ENCODE measurements at regions of chr6 and their contacts with region 1.

Region 1: GRCh38 chr6:113690281-113691259 is 166.6 kb upstream of the MARCKS start:
- DNase-seq: no peak
- H3K4me3 ChIP-seq: no peak overlapping the region
- H3K4me3 Mint-ChIP-seq: no peak overlapping the region
- H3K27ac Mint-ChIP-seq: no peak overlapping the region
- H3K4me1 ChIP-seq: peaks cover 50% of the 10 kb centered on the region
- H3K4me1 Mint-ChIP-seq: peaks cover 44% of the 10 kb centered on the region
- H3K27me3 ChIP-seq: no peaks in the 10 kb centered on the region
- H3K27me3 Mint-ChIP-seq: no peaks in the 10 kb centered on the region
- CTCF ChIP-seq: no peak

Region 2: DNA sequence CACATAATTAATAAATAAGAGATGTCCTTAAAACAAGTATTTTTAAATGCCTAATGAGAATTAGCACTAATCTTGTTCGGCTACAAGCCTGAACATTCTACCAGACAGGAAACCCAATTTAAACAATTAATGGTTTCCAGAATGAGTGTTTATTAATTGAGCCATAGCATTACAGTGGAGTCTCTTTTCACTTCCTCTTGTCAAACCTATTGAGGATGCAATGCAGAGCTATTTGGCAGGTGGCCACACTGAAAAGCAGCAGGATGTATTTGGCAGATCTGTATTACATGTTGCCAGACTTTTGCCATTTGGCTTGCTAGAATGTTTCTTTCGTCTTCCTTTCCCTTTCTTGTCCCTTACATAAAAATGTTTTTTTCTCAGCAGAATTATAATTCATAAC is 308.6 kb before region 1 on chr6:
- CTCF ChIA-PET with region 1: no interaction called
- POLR2A ChIA-PET with region 1: no interaction called
- intact Hi-C with region 1: no loop called
- DNase-seq: no peak
- H3K4me3 ChIP-seq: no peak overlapping the region
- H3K4me3 Mint-ChIP-seq: no peak overlapping the region
- H3K27ac Mint-ChIP-seq: no peak overlapping the region
- H3K4me1 ChIP-seq: no peaks in the 10 kb centered on the region
- H3K4me1 Mint-ChIP-seq: no peaks in the 10 kb centered on the region
- H3K27me3 ChIP-seq: no peaks in the 10 kb centered on the region
- H3K27me3 Mint-ChIP-seq: no peaks in the 10 kb centered on the region
- CTCF ChIP-seq: no peak

Region 3: GRCh38 chr6:113596387-113597230 is 94.0 kb before region 1 on chr6:
- CTCF ChIA-PET with region 1: no interaction called
- POLR2A ChIA-PET with region 1: no interaction called
- intact Hi-C with region 1: loop called (anchors 5 kb)
- DNase-seq: no peak
- H3K4me3 ChIP-seq: no peak overlapping the region
- H3K4me3 Mint-ChIP-seq: no peak overlapping the region
- H3K27ac Mint-ChIP-seq: no peak overlapping the region
- H3K4me1 ChIP-seq: peaks cover 11% of the 10 kb centered on the region; the same call in 1 of the 2 replicates
- H3K4me1 Mint-ChIP-seq: peaks cover 22% of the 10 kb centered on the region
- H3K27me3 ChIP-seq: no peaks in the 10 kb centered on the region
- H3K27me3 Mint-ChIP-seq: no peaks in the 10 kb centered on the region
- CTCF ChIP-seq: no peak

Region 4: GRCh38 chr6:113668641-113669408 is 21.7 kb before region 1 on chr6:
- CTCF ChIA-PET with region 1: no interaction called
- POLR2A ChIA-PET with region 1: no interaction called
- intact Hi-C with region 1: loop called (anchors 1 kb)
- DNase-seq: no peak
- H3K4me3 ChIP-seq: no peak overlapping the region
- H3K4me3 Mint-ChIP-seq: no peak overlapping the region
- H3K27ac Mint-ChIP-seq: no peak overlapping the region
- H3K4me1 ChIP-seq: peaks cover 11% of the 10 kb centered on the region
- H3K4me1 Mint-ChIP-seq: peaks cover 9% of the 10 kb centered on the region
- H3K27me3 ChIP-seq: no peaks in the 10 kb centered on the region
- H3K27me3 Mint-ChIP-seq: no peaks in the 10 kb centered on the region
- CTCF ChIP-seq: no peak

Region 5: GRCh38 chr6:113701552-113702254 is 11.1 kb after region 1 on chr6:
- CTCF ChIA-PET with region 1: no interaction called
- POLR2A ChIA-PET with region 1: no interaction called
- intact Hi-C with region 1: no loop called
- DNase-seq: no peak
- H3K4me3 ChIP-seq: no peak overlapping the region
- H3K4me3 Mint-ChIP-seq: no peak overlapping the region
- H3K27ac Mint-ChIP-seq: no peak overlapping the region
- H3K4me1 ChIP-seq: no peaks in the 10 kb centered on the region; the same call in 1 of the 2 replicates
- H3K4me1 Mint-ChIP-seq: peaks cover 6% of the 10 kb centered on the region
- H3K27me3 ChIP-seq: no peaks in the 10 kb centered on the region
- H3K27me3 Mint-ChIP-seq: no peaks in the 10 kb centered on the region
- CTCF ChIP-seq: no peak

Region 6: DNA sequence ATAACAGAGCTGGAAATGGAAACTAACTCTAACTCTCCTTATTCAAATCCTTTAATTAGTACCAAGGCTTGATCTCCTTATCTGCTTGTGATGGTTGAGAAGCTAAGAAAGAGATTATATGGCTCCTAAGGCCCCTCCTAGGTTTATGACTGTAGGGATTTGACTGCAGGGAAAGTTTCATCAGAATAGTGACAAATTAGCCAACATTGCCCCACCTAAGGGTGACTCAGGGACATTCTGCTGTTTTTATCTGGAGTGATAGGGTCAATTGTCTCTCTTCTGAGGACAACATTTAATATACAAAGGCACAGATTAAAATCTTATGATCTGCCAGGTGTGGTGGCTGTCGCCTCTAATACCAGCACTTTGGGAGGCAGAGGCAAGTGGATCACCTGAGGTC is 28.5 kb after region 1 on chr6:
- CTCF ChIA-PET with region 1: no interaction called
- POLR2A ChIA-PET with region 1: no interaction called
- intact Hi-C with region 1: loop called (anchors 1 kb)
- DNase-seq: peak; percentile 68 to 77
- H3K4me3 ChIP-seq: no peak overlapping the region
- H3K4me3 Mint-ChIP-seq: no peak overlapping the region
- H3K27ac Mint-ChIP-seq: peak overlapping the region; percentile 65
- H3K4me1 ChIP-seq: peaks cover 18% of the 10 kb centered on the region
- H3K4me1 Mint-ChIP-seq: peaks cover 25% of the 10 kb centered on the region
- H3K27me3 ChIP-seq: no peaks in the 10 kb centered on the region
- H3K27me3 Mint-ChIP-seq: no peaks in the 10 kb centered on the region
- CTCF ChIP-seq: no peak

Region 7: GRCh38 chr6:113776998-113777397 is 86.4 kb after region 1 on chr6:
- CTCF ChIA-PET with region 1: no interaction called
- POLR2A ChIA-PET with region 1: no interaction called
- intact Hi-C with region 1: loop called (anchors 5 kb)
- DNase-seq: peak in 1 of 2 experiments; percentile 37
- H3K4me3 ChIP-seq: no peak overlapping the region
- H3K4me3 Mint-ChIP-seq: peak overlapping the region; percentile 69
- H3K27ac Mint-ChIP-seq: peak overlapping the region; percentile 93
- H3K4me1 ChIP-seq: peaks cover 38% of the 10 kb centered on the region
- H3K4me1 Mint-ChIP-seq: peaks cover 23% of the 10 kb centered on the region
- H3K27me3 ChIP-seq: no peaks in the 10 kb centered on the region
- H3K27me3 Mint-ChIP-seq: no peaks in the 10 kb centered on the region
- CTCF ChIP-seq: no peak

Measured in Caco-2 (cell line).